ENCODE measurements at regions of chr1 and their contacts with region 1.

Region 1: GRCh38 chr1:36134505-36135329 is 9.7 kb upstream of the COL8A2 start:
- DNase-seq: peak; percentile 86
- H3K4me3 ChIP-seq: no peak overlapping the region; a peak in 1 of 4 replicates
- H3K27ac ChIP-seq: peak overlapping the region; percentile 45 to 89
- H3K4me1 ChIP-seq: peaks cover 14 to 43% of the 10 kb centered on the region in 2 experiments; a peak in 3 of 4 replicates
- H3K27me3 ChIP-seq: no peaks in the 10 kb centered on the region
- CTCF ChIP-seq: peak; percentile 88
- EP300 ChIP-seq: no peak
- RAD21 ChIP-seq: peak; percentile 92

Region 2: GRCh38 chr1:36088575-36089443 is 45.9 kb before region 1 on chr1 and contains the start of gene ADPRS:
- CTCF ChIA-PET with region 1: interaction called, 700 read pairs
- POLR2A ChIA-PET with region 1: no interaction called
- DNase-seq: peak; percentile 95
- H3K4me3 ChIP-seq: peak within 1 kb of the TSS; percentile 95 to 97
- H3K27ac ChIP-seq: peak within 1 kb of the TSS; percentile 45 to 91; a peak in 3 of 4 replicates
- H3K4me1 ChIP-seq: peaks cover 3 to 47% of the 10 kb centered on the region in 2 experiments; a peak in 3 of 4 replicates
- H3K27me3 ChIP-seq: no peaks in the 10 kb centered on the region
- CTCF ChIP-seq: peak; percentile 93
- EP300 ChIP-seq: peak in 1 of 2 experiments; percentile 54; a peak in 1 of 4 replicates
- RAD21 ChIP-seq: peak; percentile 43
- polyA plus RNA-seq, gene ADPRS: 54.2 and 62.3 TPM in 2 replicates

Region 3: DNA sequence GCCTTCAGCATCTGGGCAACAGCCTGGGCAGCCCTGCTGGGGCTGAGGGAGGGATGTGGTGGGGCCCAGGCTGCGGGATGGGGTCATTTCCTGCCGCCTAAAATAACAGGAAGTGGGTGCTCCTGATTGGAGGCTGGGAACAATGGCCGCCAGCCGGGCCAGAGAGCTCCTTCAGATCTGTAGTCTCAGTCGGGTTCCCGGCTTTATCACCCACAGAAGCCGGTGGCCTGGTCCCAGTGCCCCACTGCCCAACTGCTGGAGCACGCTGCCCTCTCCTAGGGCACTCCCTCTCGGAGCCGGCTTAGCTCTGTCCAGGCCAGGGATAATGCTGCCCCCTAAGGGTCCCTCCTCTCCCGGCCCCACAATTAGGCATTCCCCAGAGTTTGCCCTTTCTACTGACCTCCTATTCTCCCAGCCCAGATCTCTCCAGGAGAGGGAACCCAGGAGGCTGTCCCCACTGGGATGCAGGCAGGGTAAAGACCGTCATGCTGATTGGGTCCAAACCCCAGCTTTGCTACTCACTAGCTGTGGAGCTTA is 26.3 kb after region 1 on chr1:
- CTCF ChIA-PET with region 1: interaction called, 11 read pairs
- POLR2A ChIA-PET with region 1: no interaction called
- DNase-seq: peak; percentile 86
- H3K4me3 ChIP-seq: peak overlapping the region; percentile 47 to 72
- H3K27ac ChIP-seq: peak overlapping the region; percentile 81 to 83
- H3K4me1 ChIP-seq: peaks cover 31 to 44% of the 10 kb centered on the region in 2 experiments
- H3K27me3 ChIP-seq: no peaks in the 10 kb centered on the region
- CTCF ChIP-seq: peak; percentile 64
- EP300 ChIP-seq: no peak
- RAD21 ChIP-seq: peak; percentile 45